Activated CD8-positive, alpha-beta memory T cell treated with anti-CD3 and anti-CD28 coated beads, Interleukin-2, amount 10 ng/mL, durations not matched to agents 7 days and 5 days (primary cell): ENCODE measurements at regions of chr2 and their contacts with region 1.

Region 1: GRCh38 chr2:157876066-157876787 is at the start of gene ACVR1:
- DNase-seq: peak; percentile 91
- ATAC-seq: peak; percentile 86
- H3K4me3 Mint-ChIP-seq: peak within 1 kb of the TSS; percentile 86
- H3K27ac Mint-ChIP-seq: peak within 1 kb of the TSS; percentile 75
- H3K4me1 Mint-ChIP-seq: peaks cover 58% of the 10 kb centered on the region
- H3K27me3 Mint-ChIP-seq: no peaks in the 10 kb centered on the region
- total RNA-seq, gene ACVR1: 18.7 to 19.4 TPM

Region 2: GRCh38 chr2:157866202-157866601 is 10.0 kb before region 1 on chr2:
- CTCF ChIA-PET with region 1: interaction called, 10 read pairs
- DNase-seq: no peak
- ATAC-seq: no peak
- H3K4me3 Mint-ChIP-seq: no peak overlapping the region
- H3K27ac Mint-ChIP-seq: no peak overlapping the region
- H3K4me1 Mint-ChIP-seq: peaks cover 40% of the 10 kb centered on the region
- H3K27me3 Mint-ChIP-seq: no peaks in the 10 kb centered on the region

Region 3: DNA sequence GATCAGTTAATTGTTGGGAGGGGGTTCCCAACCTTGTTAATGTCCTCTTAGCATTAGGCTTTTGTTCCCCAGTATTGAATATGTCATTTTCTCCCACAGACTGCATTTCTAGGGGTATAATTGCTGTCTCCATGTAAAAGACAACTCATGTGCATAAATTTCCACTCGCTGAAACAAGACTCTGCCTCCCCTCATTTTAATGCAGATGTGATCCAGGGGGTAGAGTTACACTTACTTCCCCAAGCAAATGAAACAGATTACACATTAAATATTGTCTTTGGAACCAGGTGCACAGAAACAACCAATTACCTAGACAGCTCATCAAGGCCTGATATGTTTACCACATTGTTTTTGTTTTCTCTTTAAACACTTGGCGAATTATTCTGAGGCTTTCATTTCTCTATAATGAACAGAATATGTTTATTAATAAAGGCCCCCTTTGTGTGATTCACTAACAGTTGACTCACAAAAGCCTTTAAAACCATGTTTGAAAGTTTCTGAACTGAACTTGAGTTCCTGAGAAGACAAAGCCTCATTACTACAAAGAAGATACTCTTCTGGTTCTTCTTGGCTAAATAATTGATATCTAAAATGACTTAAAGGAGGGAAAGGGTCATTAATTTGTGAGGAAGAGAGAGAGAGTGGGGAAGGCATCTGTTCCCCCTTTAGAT is 14.9 kb after region 1 on chr2:
- CTCF ChIA-PET with region 1: interaction called, 17 read pairs
- DNase-seq: no peak
- ATAC-seq: no peak
- H3K4me3 Mint-ChIP-seq: no peak overlapping the region
- H3K27ac Mint-ChIP-seq: peak overlapping the region; percentile 68
- H3K4me1 Mint-ChIP-seq: peaks cover 43% of the 10 kb centered on the region
- H3K27me3 Mint-ChIP-seq: no peaks in the 10 kb centered on the region

Region 4: GRCh38 chr2:157898591-157898996 is 22.4 kb after region 1 on chr2:
- CTCF ChIA-PET with region 1: interaction called, 32 read pairs
- DNase-seq: peak; percentile 75
- ATAC-seq: peak; percentile 59
- H3K4me3 Mint-ChIP-seq: peak overlapping the region; percentile 80
- H3K27ac Mint-ChIP-seq: peak overlapping the region; percentile 100
- H3K4me1 Mint-ChIP-seq: peaks cover 65% of the 10 kb centered on the region
- H3K27me3 Mint-ChIP-seq: no peaks in the 10 kb centered on the region

Region 5: GRCh38 chr2:157919181-157919580 is 43.0 kb after region 1 on chr2:
- CTCF ChIA-PET with region 1: no interaction called
- DNase-seq: no peak
- ATAC-seq: no peak
- H3K4me3 Mint-ChIP-seq: no peak overlapping the region
- H3K27ac Mint-ChIP-seq: no peak overlapping the region
- H3K4me1 Mint-ChIP-seq: no peaks in the 10 kb centered on the region
- H3K27me3 Mint-ChIP-seq: no peaks in the 10 kb centered on the region

Region 6: DNA sequence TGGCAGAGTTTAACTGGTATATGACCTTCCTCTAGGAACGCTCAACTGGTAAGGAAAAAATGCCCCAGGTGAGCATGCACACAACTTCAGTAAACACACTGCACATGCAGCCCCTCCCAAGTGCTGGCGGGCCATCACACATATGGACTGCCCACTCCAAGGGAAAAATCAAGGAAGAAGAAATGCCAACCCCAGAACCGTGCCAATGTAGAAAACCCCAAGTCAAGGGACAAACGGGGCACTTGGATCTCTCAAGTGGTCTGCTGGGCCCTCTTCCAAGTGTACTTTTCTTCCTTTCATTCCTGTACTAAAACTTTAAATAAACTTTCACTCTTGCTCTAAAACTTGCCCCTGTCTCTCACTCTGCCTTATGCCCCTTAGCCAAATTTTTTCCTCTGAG is 76.3 kb after region 1 on chr2:
- CTCF ChIA-PET with region 1: no interaction called
- DNase-seq: no peak
- ATAC-seq: no peak
- H3K4me3 Mint-ChIP-seq: no peak overlapping the region
- H3K27ac Mint-ChIP-seq: no peak overlapping the region
- H3K4me1 Mint-ChIP-seq: peaks cover 2% of the 10 kb centered on the region
- H3K27me3 Mint-ChIP-seq: no peaks in the 10 kb centered on the region

Region 7: GRCh38 chr2:157967856-157968255 is 91.6 kb after region 1 on chr2:
- CTCF ChIA-PET with region 1: no interaction called
- DNase-seq: no peak
- ATAC-seq: no peak
- H3K4me3 Mint-ChIP-seq: no peak overlapping the region
- H3K27ac Mint-ChIP-seq: no peak overlapping the region
- H3K4me1 Mint-ChIP-seq: no peaks in the 10 kb centered on the region
- H3K27me3 Mint-ChIP-seq: no peaks in the 10 kb centered on the region